T-cell (primary cell): ENCODE measurements at regions of chr12 and their contacts with region 1.

Region 1: DNA sequence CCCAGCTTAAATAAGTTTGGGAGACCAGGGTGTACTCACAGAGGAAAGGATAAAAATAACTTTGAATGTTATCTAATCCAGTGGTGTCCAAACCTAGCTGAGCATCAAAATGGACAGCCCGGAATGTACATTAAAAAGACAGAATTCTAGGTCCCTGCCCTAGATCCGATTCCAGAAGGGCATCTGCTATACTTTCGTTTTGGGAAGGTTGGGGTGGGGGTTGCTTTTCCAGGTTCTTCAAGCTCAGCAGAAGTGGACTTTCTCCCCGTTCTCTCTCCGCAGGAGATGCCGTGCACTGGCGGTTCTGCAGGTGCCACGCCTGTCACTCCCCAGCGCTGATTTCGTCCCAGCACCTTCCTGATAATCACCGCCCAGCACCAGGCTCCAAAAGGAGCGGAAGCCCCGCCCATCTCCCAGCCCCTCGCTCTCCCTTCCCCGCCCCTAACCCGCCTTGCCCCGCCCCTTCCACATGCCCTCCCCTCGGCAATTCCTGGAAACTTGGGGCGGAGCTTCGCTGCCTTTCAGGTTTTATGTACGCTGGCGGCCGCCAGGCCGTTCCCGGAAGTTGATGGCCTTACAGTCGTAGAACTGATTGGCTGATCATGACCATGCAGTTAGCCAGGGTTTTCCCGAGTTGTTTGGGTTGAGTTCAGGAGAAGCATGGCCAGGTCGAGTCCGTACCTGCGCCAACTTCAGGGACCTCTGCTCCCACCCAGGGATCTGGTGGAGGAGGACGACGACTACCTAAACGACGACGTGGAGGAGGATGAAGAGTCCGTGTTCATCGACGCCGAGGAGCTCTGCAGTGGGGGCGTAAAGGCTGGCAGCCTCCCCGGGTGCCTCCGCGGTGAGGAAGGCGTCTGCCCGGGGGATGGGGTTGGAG is at the start of gene HELB:
- DNase-seq: peak; percentile 84 to 97 (median 92)
- ATAC-seq: peak; percentile 81 to 89 (median 85)
- H3K4me3 ChIP-seq: peak within 1 kb of the TSS; percentile 94 to 98
- H3K4me3 Mint-ChIP-seq: peak within 1 kb of the TSS; percentile 99
- H3K27ac ChIP-seq: peak within 1 kb of the TSS; percentile 87
- H3K27ac Mint-ChIP-seq: peak within 1 kb of the TSS; percentile 98 to 99
- H3K4me1 ChIP-seq: peaks cover 7 to 13% of the 10 kb centered on the region in 2 experiments
- H3K4me1 Mint-ChIP-seq: peaks cover 45 to 68% (median 47%) of the 10 kb centered on the region in 3 donors
- H3K27me3 ChIP-seq: no peaks in the 10 kb centered on the region
- H3K27me3 Mint-ChIP-seq: no peaks in the 10 kb centered on the region
- total RNA-seq, gene HELB: 38.6 to 66.4 (median 45.7) TPM

Region 2: GRCh38 chr12:66169221-66170170 is 132.7 kb before region 1 on chr12 and contains the start of gene TMBIM4:
- CTCF ChIA-PET with region 1: interaction called in 1 of 2 experiments, 8 read pairs
- POLR2A ChIA-PET with region 1: interaction called in 1 of 2 experiments, 10 read pairs
- DNase-seq: peak; percentile 60 to 90 (median 79)
- ATAC-seq: peak; percentile 80 to 82 (median 80)
- H3K4me3 ChIP-seq: peak within 1 kb of the TSS; percentile 96 to 99
- H3K4me3 Mint-ChIP-seq: peak within 1 kb of the TSS; percentile 90 to 96 (median 90)
- H3K27ac ChIP-seq: peak within 1 kb of the TSS; percentile 99
- H3K27ac Mint-ChIP-seq: peak within 1 kb of the TSS; percentile 98
- H3K4me1 ChIP-seq: peaks cover 12 to 17% of the 10 kb centered on the region in 2 experiments
- H3K4me1 Mint-ChIP-seq: peaks cover 54 to 60% (median 54%) of the 10 kb centered on the region in 3 donors
- H3K27me3 ChIP-seq: peaks cover 0 to 6% of the 10 kb centered on the region in 2 experiments
- H3K27me3 Mint-ChIP-seq: no peaks in the 10 kb centered on the region
- total RNA-seq, gene TMBIM4: 44.7 to 90.0 (median 76.7) TPM

Region 3: DNA sequence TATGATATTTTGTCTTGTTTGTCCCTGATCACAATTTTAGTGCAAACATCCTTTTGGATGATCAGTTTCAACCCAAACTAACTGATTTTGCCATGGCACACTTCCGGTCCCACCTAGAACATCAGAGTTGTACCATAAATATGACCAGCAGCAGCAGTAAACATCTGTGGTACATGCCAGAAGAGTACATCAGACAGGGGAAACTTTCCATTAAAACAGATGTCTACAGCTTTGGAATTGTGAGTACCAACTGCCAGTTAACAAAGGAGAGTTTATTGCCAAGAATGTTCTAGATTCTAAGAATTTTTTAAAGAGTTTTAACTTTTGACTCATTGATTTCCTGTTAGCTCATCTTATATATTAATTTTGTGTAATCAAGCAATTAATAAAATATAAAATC is 57.7 kb before region 1 on chr12:
- CTCF ChIA-PET with region 1: no interaction called
- POLR2A ChIA-PET with region 1: no interaction called
- DNase-seq: no peak
- ATAC-seq: no peak
- H3K4me3 ChIP-seq: no peak overlapping the region
- H3K4me3 Mint-ChIP-seq: no peak overlapping the region
- H3K27ac ChIP-seq: no peak overlapping the region
- H3K27ac Mint-ChIP-seq: no peak overlapping the region
- H3K4me1 ChIP-seq: no peaks in the 10 kb centered on the region
- H3K4me1 Mint-ChIP-seq: no peaks in the 10 kb centered on the region
- H3K27me3 ChIP-seq: peaks cover 0 to 4% of the 10 kb centered on the region in 2 experiments
- H3K27me3 Mint-ChIP-seq: peaks cover 10 to 13% of the 10 kb centered on the region in 2 donors

Region 4: GRCh38 chr12:66279123-66279712 is 23.0 kb before region 1 on chr12:
- CTCF ChIA-PET with region 1: interaction called, 6 to 17 read pairs
- POLR2A ChIA-PET with region 1: interaction called, 10 to 11 read pairs
- DNase-seq: peak in 30 of 35 experiments; percentile 19 to 69 (median 38)
- ATAC-seq: peak; percentile 67 to 83 (median 82)
- H3K4me3 ChIP-seq: no peak overlapping the region
- H3K4me3 Mint-ChIP-seq: peak overlapping the region in 1 of 3 donors; percentile 17
- H3K27ac ChIP-seq: no peak overlapping the region
- H3K27ac Mint-ChIP-seq: no peak overlapping the region
- H3K4me1 ChIP-seq: peaks cover 10 to 20% of the 10 kb centered on the region in 2 experiments
- H3K4me1 Mint-ChIP-seq: peaks cover 42 to 56% (median 55%) of the 10 kb centered on the region in 3 donors
- H3K27me3 ChIP-seq: no peaks in the 10 kb centered on the region
- H3K27me3 Mint-ChIP-seq: no peaks in the 10 kb centered on the region

Region 5: GRCh38 chr12:66288121-66288520 is 14.1 kb before region 1 on chr12:
- CTCF ChIA-PET with region 1: interaction called, 9 to 11 read pairs
- POLR2A ChIA-PET with region 1: interaction called, 5 to 18 read pairs
- DNase-seq: peak; percentile 18 to 88 (median 58)
- ATAC-seq: peak; percentile 92 to 98 (median 94)
- H3K4me3 ChIP-seq: peak overlapping the region; percentile 12 to 23
- H3K4me3 Mint-ChIP-seq: peak overlapping the region; percentile 41 to 71 (median 59)
- H3K27ac ChIP-seq: peak overlapping the region; percentile 12
- H3K27ac Mint-ChIP-seq: peak overlapping the region; percentile 85 to 92
- H3K4me1 ChIP-seq: peaks cover 55 to 78% of the 10 kb centered on the region in 2 experiments
- H3K4me1 Mint-ChIP-seq: peaks cover 91 to 95% (median 93%) of the 10 kb centered on the region in 3 donors
- H3K27me3 ChIP-seq: no peaks in the 10 kb centered on the region
- H3K27me3 Mint-ChIP-seq: no peaks in the 10 kb centered on the region

Region 6: DNA sequence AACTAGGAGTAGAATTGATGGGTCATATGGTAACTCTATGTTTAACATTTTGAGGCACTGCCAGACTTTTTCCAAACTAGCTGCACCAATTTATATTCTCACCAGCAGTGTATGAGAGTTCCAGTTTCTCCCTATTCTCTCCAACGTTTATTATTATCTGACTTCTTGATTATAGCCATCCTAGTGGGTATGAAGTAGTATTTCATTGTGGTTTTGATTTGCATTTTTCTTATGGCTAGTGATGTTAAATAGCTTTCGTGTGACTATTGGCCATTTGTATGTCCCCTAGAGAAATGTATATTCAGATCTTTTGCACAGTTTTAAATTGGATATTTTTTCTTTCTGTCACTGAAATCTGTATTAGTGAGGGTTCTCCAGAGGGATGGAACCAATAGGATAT is 37.9 kb after region 1 on chr12:
- CTCF ChIA-PET with region 1: no interaction called
- POLR2A ChIA-PET with region 1: interaction called, 8 to 10 read pairs
- DNase-seq: no peak
- ATAC-seq: no peak
- H3K4me3 ChIP-seq: no peak overlapping the region
- H3K4me3 Mint-ChIP-seq: no peak overlapping the region
- H3K27ac ChIP-seq: no peak overlapping the region
- H3K27ac Mint-ChIP-seq: no peak overlapping the region
- H3K4me1 ChIP-seq: no peaks in the 10 kb centered on the region
- H3K4me1 Mint-ChIP-seq: peaks cover 21 to 26% (median 23%) of the 10 kb centered on the region in 3 donors
- H3K27me3 ChIP-seq: no peaks in the 10 kb centered on the region
- H3K27me3 Mint-ChIP-seq: no peaks in the 10 kb centered on the region

Region 7: DNA sequence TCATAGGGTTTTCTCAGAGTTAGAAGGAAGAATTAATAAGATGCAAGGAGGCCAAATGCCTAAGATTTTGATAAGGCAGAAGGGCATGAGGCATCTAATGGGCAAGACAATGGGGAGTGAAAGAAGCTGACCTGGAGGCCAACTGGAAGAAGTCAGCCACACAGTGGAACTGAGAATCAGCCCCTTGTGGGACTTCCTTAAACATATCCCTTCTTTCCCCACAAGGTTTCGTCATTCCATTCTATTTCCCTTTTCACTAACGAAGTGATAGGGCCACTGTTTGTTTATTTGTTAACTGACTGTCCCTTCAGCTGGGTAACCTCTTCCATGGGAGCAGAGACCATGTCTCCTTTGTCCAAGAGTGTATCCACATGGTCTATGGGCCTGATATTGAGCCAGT is 86.3 kb after region 1 on chr12:
- CTCF ChIA-PET with region 1: no interaction called
- POLR2A ChIA-PET with region 1: no interaction called
- DNase-seq: no peak
- ATAC-seq: no peak
- H3K4me3 ChIP-seq: no peak overlapping the region
- H3K4me3 Mint-ChIP-seq: no peak overlapping the region
- H3K27ac ChIP-seq: no peak overlapping the region
- H3K27ac Mint-ChIP-seq: no peak overlapping the region
- H3K4me1 ChIP-seq: peaks cover 3 to 6% of the 10 kb centered on the region in 2 experiments
- H3K4me1 Mint-ChIP-seq: peaks cover 2 to 6% (median 5%) of the 10 kb centered on the region in 3 donors
- H3K27me3 ChIP-seq: peaks cover 0 to 3% of the 10 kb centered on the region in 2 experiments
- H3K27me3 Mint-ChIP-seq: peaks cover 0 to 14% of the 10 kb centered on the region in 2 donors